ENCODE measurements at regions of chr16 and their contacts with region 1.

Region 1: DNA sequence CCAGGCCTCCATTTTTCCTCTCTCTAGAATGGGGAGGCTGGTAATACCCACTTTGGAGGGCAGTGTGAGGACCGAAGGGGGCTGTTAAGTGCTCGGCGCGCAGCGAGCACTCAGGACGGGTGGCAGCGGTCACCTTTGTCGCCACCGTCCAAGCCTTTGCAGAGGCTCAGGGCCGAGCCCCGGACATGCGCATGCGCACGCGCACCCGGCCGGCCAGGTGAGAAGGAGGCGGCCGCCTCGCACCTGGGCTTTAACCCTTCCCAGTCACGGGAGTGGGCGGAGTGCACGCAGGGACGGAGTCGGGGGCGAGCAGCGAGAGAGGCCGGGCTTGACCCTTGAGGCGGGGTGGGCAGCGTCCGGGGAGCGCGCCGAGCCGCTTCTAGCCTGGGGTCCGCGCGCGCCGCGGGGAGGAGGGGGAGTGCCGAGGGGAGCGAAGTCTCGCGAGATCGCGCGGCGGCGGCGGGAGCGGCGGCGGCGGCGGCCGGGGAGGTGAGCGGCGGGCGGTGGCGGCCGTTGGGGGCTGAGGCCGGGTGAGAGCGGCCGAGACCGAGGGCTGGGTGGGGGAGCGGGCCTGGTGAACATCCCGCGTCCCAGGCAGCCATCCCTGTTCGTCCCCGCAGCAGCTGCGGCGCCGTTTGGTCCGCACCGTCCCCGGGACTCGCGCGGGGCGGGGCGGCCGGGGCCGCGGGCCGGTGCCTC is at the start of gene MRTFB:
- DNase-seq: peak; percentile 51 to 81
- H3K4me3 ChIP-seq: peak within 1 kb of the TSS; percentile 77 to 83
- H3K27ac ChIP-seq: peak within 1 kb of the TSS; percentile 78 to 82
- H3K4me1 ChIP-seq: peaks cover 0 to 32% (median 13%) of the 10 kb centered on the region in 4 donors
- H3K27me3 ChIP-seq: no peaks in the 10 kb centered on the region
- CTCF ChIP-seq: no peak

Region 2: DNA sequence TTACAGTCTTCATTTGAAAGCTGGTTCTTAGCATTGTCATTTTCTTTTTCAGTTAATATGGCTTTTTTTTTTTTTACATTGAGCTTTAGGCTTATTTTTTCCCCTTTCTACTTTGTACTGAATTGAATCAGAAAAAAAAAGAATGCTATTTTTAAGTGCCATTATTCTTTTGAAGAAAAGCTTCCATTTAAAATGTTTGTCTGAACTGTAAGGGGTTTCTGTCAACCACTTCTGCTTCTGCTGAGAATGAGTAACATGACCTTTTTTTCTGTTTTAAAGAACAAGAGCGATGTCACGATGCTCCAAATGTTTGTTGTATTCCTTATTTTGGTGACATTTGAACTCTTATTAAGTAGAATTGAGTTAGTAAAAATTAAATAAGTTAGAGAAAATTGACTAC is 50.1 kb after region 1 on chr16:
- intact Hi-C with region 1: loop called (anchors 10 kb)
- DNase-seq: no peak
- H3K4me3 ChIP-seq: no peak overlapping the region
- H3K27ac ChIP-seq: no peak overlapping the region
- H3K4me1 ChIP-seq: peaks cover 0 to 26% (median 16%) of the 10 kb centered on the region in 4 donors
- H3K27me3 ChIP-seq: no peaks in the 10 kb centered on the region
- CTCF ChIP-seq: no peak

Region 3: GRCh38 chr16:14186007-14186794 is 115.2 kb after region 1 on chr16:
- intact Hi-C with region 1: loop called (anchors 10 kb)
- DNase-seq: peak; percentile 32 to 70
- H3K4me3 ChIP-seq: peak overlapping the region; percentile 56 to 59
- H3K27ac ChIP-seq: peak overlapping the region; percentile 75 to 84
- H3K4me1 ChIP-seq: peaks cover 0 to 36% (median 16%) of the 10 kb centered on the region in 4 donors
- H3K27me3 ChIP-seq: no peaks in the 10 kb centered on the region
- CTCF ChIP-seq: peak; percentile 66 to 68